Activated naive CD4-positive, alpha-beta T cell treated with anti-CD3 and anti-CD28 coated beads for 36 hours (primary cell): ENCODE measurements at regions of chr13 and their contacts with region 1.

Region 1: GRCh38 chr13:89150362-89150761 is 1479.2 kb downstream of the SLITRK5 start:
- DNase-seq: no peak
- H3K4me3 Mint-ChIP-seq: no peak overlapping the region
- H3K27ac Mint-ChIP-seq: no peak overlapping the region
- H3K4me1 Mint-ChIP-seq: no peaks in the 10 kb centered on the region
- H3K27me3 Mint-ChIP-seq: no peaks in the 10 kb centered on the region

Region 2: DNA sequence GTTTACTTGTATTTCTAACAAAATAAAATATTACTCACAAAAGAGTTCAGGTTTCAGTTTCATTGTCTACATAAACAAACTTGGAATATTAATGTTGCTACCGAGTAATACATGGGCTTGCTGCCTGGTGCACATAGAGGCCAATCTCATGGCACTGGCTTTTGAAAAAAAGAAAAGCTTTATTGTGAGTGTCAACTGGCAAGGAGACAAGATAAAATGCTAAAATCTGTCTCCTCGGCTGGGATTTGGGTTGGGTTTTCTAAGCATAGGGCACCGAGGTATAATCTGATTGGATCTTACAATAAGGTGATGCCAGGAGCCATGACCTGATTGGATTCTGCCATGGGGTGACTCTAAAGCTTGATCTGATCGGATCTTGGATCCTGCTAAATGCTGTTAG is 677.2 kb after region 1 on chr13:
- CTCF ChIA-PET with region 1: no interaction called
- intact Hi-C with region 1: loop called (anchors 10 kb)
- DNase-seq: no peak
- H3K4me3 Mint-ChIP-seq: no peak overlapping the region
- H3K27ac Mint-ChIP-seq: no peak overlapping the region
- H3K4me1 Mint-ChIP-seq: no peaks in the 10 kb centered on the region
- H3K27me3 Mint-ChIP-seq: no peaks in the 10 kb centered on the region